ENCODE measurements at regions of chr7 and their contacts with region 1.

Region 1: DNA sequence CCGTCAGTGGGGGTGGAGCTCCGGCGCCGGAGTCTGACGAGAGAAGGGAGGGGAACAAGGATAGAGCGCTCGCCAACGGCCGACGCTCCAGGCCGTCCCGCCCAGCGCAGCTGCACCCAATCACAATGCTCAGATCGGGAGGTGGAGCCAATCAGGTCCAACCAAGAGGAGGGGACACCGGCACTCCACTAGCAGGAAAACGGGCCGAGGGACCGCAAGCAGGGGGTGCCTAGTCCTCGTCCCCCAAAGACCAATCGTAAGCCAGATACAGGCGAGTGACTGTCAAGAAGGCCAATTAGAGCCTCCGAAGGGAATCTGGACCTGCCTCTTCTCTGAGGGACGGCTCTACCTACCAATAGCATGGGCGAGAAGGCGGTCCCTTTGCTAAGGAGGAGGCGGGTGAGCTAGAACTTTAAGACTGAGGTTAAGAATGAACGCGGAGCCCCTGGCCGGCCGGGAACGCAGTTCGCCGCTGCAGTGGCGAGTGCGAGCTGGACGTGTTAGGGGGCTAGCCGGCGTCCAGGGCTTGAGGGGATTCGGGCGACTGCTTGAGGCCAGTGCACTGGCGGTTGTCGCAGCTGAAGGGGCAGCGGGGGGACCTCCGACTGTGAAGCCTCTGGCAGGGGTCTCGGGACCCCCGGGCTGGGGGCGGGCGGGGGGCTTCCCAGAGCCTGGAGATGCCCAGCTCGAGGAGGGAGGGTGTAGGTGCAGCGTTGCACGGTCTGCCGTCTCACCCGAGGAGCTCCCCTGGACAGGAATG is at the start of gene FBXO24:
- DNase-seq: peak; percentile 98 to 100 (median 99)
- ATAC-seq: peak; percentile 82
- H3K4me3 ChIP-seq: peak within 1 kb of the TSS; percentile 95
- H3K4me3 Mint-ChIP-seq: peak within 1 kb of the TSS; percentile 97
- H3K27ac ChIP-seq: peak within 1 kb of the TSS; percentile 93 to 96
- H3K27ac Mint-ChIP-seq: no peak within 1 kb of the TSS
- H3K4me1 ChIP-seq: peaks cover 50% of the 10 kb centered on the region
- H3K4me1 Mint-ChIP-seq: peaks cover 35% of the 10 kb centered on the region
- H3K27me3 ChIP-seq: peaks cover 0 to 5% of the 10 kb centered on the region in 2 experiments
- H3K27me3 Mint-ChIP-seq: no peaks in the 10 kb centered on the region
- CTCF ChIP-seq: no peak
- total RNA-seq, gene FBXO24: 0.66 to 0.78 TPM

Region 2: DNA sequence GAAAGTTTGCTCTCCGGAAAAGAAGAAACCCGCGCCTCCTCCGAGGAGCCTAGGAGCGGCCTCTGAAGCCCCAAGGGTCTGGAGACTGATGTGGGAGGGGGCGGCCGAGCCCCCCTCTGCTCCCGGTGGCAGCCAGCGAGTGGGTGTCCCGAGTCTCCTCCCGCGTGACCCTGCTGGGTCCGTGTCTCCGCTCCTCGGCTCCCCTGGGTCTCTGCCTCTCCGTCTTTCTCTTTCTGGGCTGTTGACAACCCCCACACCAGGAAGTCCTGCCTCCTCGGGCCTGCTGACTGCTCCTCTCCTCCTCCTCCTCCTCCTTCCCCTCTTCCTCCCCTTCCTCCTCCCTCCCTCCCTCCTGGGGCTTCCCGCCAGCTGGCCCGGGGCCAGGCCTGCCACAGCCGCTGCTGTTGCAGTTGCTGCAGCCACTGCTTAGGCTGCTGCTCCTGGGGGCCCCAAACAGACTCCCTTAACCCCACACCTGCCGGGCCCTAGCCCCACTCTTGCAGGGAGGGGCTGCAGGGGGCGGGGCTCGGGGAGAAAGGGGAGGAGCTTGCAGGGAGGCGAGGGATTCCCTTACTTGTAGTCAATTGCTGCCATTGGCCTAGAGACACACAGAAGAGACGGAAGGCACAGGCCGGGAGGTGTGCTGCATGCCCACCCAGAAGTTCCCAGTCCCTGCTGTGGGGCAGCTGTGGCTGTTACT is 107.3 kb before region 1 on chr7 and contains the start of gene TSC22D4:
- CTCF ChIA-PET with region 1: interaction called, 4 read pairs
- POLR2A ChIA-PET with region 1: interaction called, 12 read pairs
- intact Hi-C with region 1: no loop called
- DNase-seq: peak; percentile 85 to 97 (median 93)
- ATAC-seq: peak; percentile 75
- H3K4me3 ChIP-seq: peak within 1 kb of the TSS; percentile 100
- H3K4me3 Mint-ChIP-seq: peak within 1 kb of the TSS; percentile 97
- H3K27ac ChIP-seq: peak within 1 kb of the TSS; percentile 73 to 84
- H3K27ac Mint-ChIP-seq: peak within 1 kb of the TSS; percentile 83
- H3K4me1 ChIP-seq: peaks cover 70% of the 10 kb centered on the region
- H3K4me1 Mint-ChIP-seq: peaks cover 49% of the 10 kb centered on the region
- H3K27me3 ChIP-seq: no peaks in the 10 kb centered on the region
- H3K27me3 Mint-ChIP-seq: no peaks in the 10 kb centered on the region
- CTCF ChIP-seq: no peak
- total RNA-seq, gene TSC22D4: 34.6 to 36.5 TPM

Region 3: GRCh38 chr7:100538654-100539435 is 47.6 kb before region 1 on chr7 and contains the start of gene AGFG2:
- CTCF ChIA-PET with region 1: no interaction called
- POLR2A ChIA-PET with region 1: interaction called, 15 read pairs
- intact Hi-C with region 1: loop called in 1 of 2 experiments (anchors 2 kb)
- DNase-seq: peak; percentile 100
- ATAC-seq: peak; percentile 94
- H3K4me3 ChIP-seq: peak within 1 kb of the TSS; percentile 73
- H3K4me3 Mint-ChIP-seq: peak within 1 kb of the TSS; percentile 99
- H3K27ac ChIP-seq: peak within 1 kb of the TSS in 1 of 2 donors; percentile 41
- H3K27ac Mint-ChIP-seq: peak within 1 kb of the TSS; percentile 77
- H3K4me1 ChIP-seq: peaks cover 44% of the 10 kb centered on the region
- H3K4me1 Mint-ChIP-seq: peaks cover 48% of the 10 kb centered on the region
- H3K27me3 ChIP-seq: no peaks in the 10 kb centered on the region
- H3K27me3 Mint-ChIP-seq: no peaks in the 10 kb centered on the region
- CTCF ChIP-seq: no peak
- total RNA-seq, gene AGFG2: 6.6 to 9.9 TPM

Region 4: GRCh38 chr7:100570954-100571828 is 15.3 kb before region 1 on chr7:
- CTCF ChIA-PET with region 1: interaction called, 5 read pairs
- POLR2A ChIA-PET with region 1: interaction called, 92 read pairs
- intact Hi-C with region 1: loop called (anchors 1 kb)
- DNase-seq: peak in 1 of 14 experiments; percentile 38
- ATAC-seq: no peak
- H3K4me3 ChIP-seq: no peak overlapping the region
- H3K4me3 Mint-ChIP-seq: peak overlapping the region; percentile 45
- H3K27ac ChIP-seq: no peak overlapping the region
- H3K27ac Mint-ChIP-seq: peak overlapping the region; percentile 73
- H3K4me1 ChIP-seq: peaks cover 55% of the 10 kb centered on the region
- H3K4me1 Mint-ChIP-seq: peaks cover 34% of the 10 kb centered on the region
- H3K27me3 ChIP-seq: no peaks in the 10 kb centered on the region
- H3K27me3 Mint-ChIP-seq: no peaks in the 10 kb centered on the region
- CTCF ChIP-seq: no peak

Region 5: DNA sequence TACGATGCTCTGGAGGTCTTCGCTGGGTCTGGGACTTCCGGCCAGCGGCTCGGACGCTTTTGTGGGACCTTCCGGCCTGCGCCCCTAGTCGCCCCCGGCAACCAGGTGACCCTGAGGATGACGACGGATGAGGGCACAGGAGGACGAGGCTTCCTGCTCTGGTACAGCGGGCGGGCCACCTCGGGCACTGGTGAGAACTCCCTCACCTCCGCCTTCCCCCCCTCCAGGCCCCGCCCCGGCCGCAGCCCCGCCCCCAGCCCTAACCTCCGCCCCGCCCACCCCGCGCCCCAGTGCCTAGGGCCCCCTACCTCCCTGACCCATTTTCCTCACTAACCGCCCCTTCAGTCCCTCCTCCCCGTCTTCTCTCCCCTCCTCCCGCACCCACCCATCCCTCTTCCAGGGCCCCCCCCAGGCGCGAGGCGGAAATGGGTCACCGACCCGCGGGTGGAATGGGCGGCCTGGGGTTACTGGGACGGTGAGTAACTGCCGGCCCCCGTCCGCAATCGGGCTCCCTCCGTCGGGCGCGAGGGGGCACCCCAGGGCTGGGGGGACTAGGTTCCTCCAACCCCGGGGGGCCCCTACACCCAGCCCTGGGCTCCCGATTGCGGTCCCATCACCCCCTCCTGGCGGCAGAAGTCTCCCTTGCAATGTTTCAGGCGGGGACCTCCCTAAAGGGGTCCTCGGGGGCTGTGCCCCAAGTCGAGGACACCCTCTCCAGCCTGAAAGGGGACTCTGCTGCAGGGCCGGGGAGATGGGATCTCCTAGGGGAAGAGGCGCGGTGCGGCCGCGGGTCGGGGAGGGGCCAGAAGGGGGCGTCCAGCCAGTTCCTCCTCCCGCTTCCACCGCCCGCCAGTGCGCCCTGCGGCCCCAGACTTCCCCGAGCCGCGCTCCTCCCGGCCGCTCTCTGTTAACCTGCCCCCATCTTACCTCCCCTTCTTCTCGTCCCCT is 17.9 kb after region 1 on chr7:
- CTCF ChIA-PET with region 1: interaction called, 3 read pairs
- POLR2A ChIA-PET with region 1: interaction called, 48 read pairs
- intact Hi-C with region 1: loop called (anchors 1 to 2 kb)
- DNase-seq: peak; percentile 57 to 90 (median 69)
- ATAC-seq: peak; percentile 66
- H3K4me3 ChIP-seq: peak overlapping the region; percentile 86
- H3K4me3 Mint-ChIP-seq: peak overlapping the region; percentile 92
- H3K27ac ChIP-seq: peak overlapping the region; percentile 13 to 63
- H3K27ac Mint-ChIP-seq: peak overlapping the region; percentile 76
- H3K4me1 ChIP-seq: peaks cover 29% of the 10 kb centered on the region
- H3K4me1 Mint-ChIP-seq: peaks cover 23% of the 10 kb centered on the region
- H3K27me3 ChIP-seq: no peaks in the 10 kb centered on the region
- H3K27me3 Mint-ChIP-seq: no peaks in the 10 kb centered on the region
- CTCF ChIP-seq: peak; percentile 62

Region 6: GRCh38 chr7:100626530-100627237 is 40.2 kb after region 1 on chr7:
- CTCF ChIA-PET with region 1: no interaction called
- POLR2A ChIA-PET with region 1: interaction called, 33 read pairs
- intact Hi-C with region 1: no loop called
- DNase-seq: peak; percentile 84 to 96 (median 89)
- ATAC-seq: peak; percentile 98
- H3K4me3 ChIP-seq: peak overlapping the region; percentile 52
- H3K4me3 Mint-ChIP-seq: peak overlapping the region; percentile 78
- H3K27ac ChIP-seq: peak overlapping the region; percentile 62 to 73
- H3K27ac Mint-ChIP-seq: peak overlapping the region; percentile 62
- H3K4me1 ChIP-seq: peaks cover 36% of the 10 kb centered on the region
- H3K4me1 Mint-ChIP-seq: peaks cover 26% of the 10 kb centered on the region
- H3K27me3 ChIP-seq: no peaks in the 10 kb centered on the region
- H3K27me3 Mint-ChIP-seq: no peaks in the 10 kb centered on the region
- CTCF ChIP-seq: no peak

Region 7: DNA sequence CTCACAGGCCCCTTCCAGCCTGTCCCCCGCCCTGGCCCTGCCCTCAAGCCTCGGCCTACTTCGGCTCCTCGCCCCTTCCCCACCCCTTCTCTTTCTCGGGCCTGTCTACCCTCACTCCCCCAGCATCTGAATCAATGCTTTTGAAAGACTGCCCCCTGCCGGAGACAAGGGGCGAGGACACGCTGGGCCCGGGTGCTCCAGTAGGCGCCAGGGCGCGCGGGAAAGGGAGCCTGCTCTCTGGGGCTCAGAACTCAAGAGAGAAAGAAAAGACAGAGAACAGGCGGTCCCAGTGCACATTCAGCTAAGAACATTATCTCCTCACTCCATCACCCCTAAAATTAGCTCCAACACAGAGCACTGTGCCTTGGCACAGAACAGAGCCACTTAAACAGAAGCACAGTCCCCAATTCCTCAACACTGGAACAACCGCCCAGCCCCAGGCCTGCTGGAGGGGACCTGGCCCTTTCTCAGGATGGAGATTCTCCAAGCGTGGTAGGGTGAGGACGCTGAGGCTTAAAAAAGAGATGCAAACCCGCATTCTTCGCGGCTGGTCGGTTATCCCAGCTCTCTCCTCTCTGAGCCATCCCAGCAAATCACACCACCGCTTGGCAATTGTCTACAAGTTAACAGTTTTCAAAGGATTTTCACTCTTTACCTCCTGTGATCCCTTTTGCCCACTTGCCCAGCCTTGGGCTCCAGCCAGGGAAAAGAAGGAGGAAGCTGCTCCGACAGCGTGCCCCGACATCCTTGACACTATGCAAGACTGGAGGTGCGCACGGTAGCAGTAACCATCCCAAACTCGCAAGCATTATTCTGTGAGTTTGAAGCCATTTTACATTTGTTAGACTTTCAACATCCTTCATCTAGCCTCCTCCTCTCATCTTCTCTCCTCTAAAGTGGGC is 105.5 kb after region 1 on chr7:
- CTCF ChIA-PET with region 1: interaction called, 4 read pairs
- POLR2A ChIA-PET with region 1: interaction called, 47 read pairs
- intact Hi-C with region 1: no loop called
- DNase-seq: peak; percentile 71 to 91 (median 79)
- ATAC-seq: peak; percentile 77
- H3K4me3 ChIP-seq: peak overlapping the region; percentile 75
- H3K4me3 Mint-ChIP-seq: peak overlapping the region; percentile 97
- H3K27ac ChIP-seq: no peak overlapping the region
- H3K27ac Mint-ChIP-seq: peak overlapping the region; percentile 85
- H3K4me1 ChIP-seq: peaks cover 62% of the 10 kb centered on the region
- H3K4me1 Mint-ChIP-seq: peaks cover 34% of the 10 kb centered on the region
- H3K27me3 ChIP-seq: no peaks in the 10 kb centered on the region
- H3K27me3 Mint-ChIP-seq: no peaks in the 10 kb centered on the region
- CTCF ChIP-seq: peak; percentile 87

Region 8: DNA sequence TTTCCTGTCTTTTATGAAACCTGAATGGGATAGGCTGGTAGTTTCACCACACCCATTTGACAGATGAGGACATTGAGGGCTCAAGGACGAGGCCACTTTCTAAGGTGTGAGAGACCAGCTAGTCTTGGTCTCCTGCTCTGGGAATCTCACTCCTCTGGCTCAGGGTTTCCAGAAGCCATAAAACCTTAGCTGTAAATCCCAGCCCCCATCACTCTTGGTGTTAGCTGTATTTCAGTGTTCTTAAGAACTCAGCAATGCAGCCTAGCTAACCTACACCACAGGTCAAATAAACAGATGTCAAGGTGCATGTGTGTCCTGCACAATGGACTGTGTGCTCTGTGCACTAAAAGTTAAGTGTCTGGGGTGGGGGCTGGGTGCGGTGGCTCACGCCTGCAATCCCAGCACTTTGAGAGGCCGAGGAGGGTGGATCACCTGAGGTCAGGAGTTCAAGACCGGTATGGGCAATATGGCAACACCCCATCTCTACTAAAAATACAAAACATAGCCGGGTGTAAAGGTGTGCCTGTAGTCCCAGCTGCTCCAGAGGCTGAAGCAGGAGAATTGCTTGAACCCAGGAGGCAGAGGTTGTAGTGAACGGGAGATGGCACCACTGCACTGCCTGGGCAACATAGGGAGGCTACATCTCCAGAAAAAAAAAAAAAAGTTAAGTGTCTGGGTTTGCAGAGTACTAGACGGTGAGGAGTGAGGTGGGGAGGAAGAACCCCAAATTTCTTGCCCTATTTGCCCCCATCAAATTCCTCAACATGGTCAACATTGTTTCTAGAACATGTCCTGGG is 133.3 kb after region 1 on chr7:
- CTCF ChIA-PET with region 1: no interaction called
- POLR2A ChIA-PET with region 1: no interaction called
- intact Hi-C with region 1: no loop called
- DNase-seq: no peak
- ATAC-seq: no peak
- H3K4me3 ChIP-seq: no peak overlapping the region
- H3K4me3 Mint-ChIP-seq: no peak overlapping the region
- H3K27ac ChIP-seq: no peak overlapping the region
- H3K27ac Mint-ChIP-seq: no peak overlapping the region
- H3K4me1 ChIP-seq: no peaks in the 10 kb centered on the region
- H3K4me1 Mint-ChIP-seq: no peaks in the 10 kb centered on the region
- H3K27me3 ChIP-seq: peaks cover 17 to 46% of the 10 kb centered on the region in 2 experiments
- H3K27me3 Mint-ChIP-seq: peaks cover 57% of the 10 kb centered on the region
- CTCF ChIP-seq: no peak

Region 9: GRCh38 chr7:101066141-101066832 is 479.8 kb after region 1 on chr7:
- CTCF ChIA-PET with region 1: no interaction called
- POLR2A ChIA-PET with region 1: no interaction called
- intact Hi-C with region 1: no loop called
- DNase-seq: no peak
- ATAC-seq: no peak
- H3K4me3 ChIP-seq: no peak overlapping the region
- H3K4me3 Mint-ChIP-seq: no peak overlapping the region
- H3K27ac ChIP-seq: no peak overlapping the region
- H3K27ac Mint-ChIP-seq: no peak overlapping the region
- H3K4me1 ChIP-seq: no peaks in the 10 kb centered on the region
- H3K4me1 Mint-ChIP-seq: no peaks in the 10 kb centered on the region
- H3K27me3 ChIP-seq: peaks cover 12 to 18% of the 10 kb centered on the region in 2 experiments
- H3K27me3 Mint-ChIP-seq: peaks cover 47% of the 10 kb centered on the region
- CTCF ChIP-seq: no peak